ENCODE measurements at regions of chr11 and their contacts with region 1.

Region 1: GRCh38 chr11:27705873-27706820 is 5.9 kb upstream of the BDNF start:
- DNase-seq: no peak
- ATAC-seq: peak; percentile 87
- H3K4me3 ChIP-seq: no peak overlapping the region
- H3K27ac ChIP-seq: no peak overlapping the region
- H3K4me1 ChIP-seq: no peaks in the 10 kb centered on the region; the same call in 1 of the 2 replicates
- H3K27me3 ChIP-seq: peaks cover 0 to 10% of the 10 kb centered on the region in 2 experiments
- CTCF ChIP-seq: peak; percentile 69 to 81 (median 77)
- EP300 ChIP-seq: no peak
- POLR2A ChIP-seq: no peak
- RAD21 ChIP-seq: peak; percentile 44

Region 2: GRCh38 chr11:27720277-27720830 is 14.2 kb after region 1 on chr11:
- CTCF ChIA-PET with region 1: interaction called, 16 read pairs
- POLR2A ChIA-PET with region 1: no interaction called
- RAD21 ChIA-PET with region 1: interaction called, 3 read pairs
- SMC1A ChIA-PET with region 1: interaction called, 4 read pairs
- in situ Hi-C with region 1: no loop called
- intact Hi-C with region 1: no loop called
- DNase-seq: no peak
- ATAC-seq: no peak
- H3K4me3 ChIP-seq: no peak overlapping the region
- H3K27ac ChIP-seq: no peak overlapping the region
- H3K4me1 ChIP-seq: no peaks in the 10 kb centered on the region
- H3K27me3 ChIP-seq: peaks cover 8 to 12% of the 10 kb centered on the region in 2 experiments
- CTCF ChIP-seq: no peak
- EP300 ChIP-seq: no peak
- POLR2A ChIP-seq: no peak
- RAD21 ChIP-seq: no peak

Region 3: DNA sequence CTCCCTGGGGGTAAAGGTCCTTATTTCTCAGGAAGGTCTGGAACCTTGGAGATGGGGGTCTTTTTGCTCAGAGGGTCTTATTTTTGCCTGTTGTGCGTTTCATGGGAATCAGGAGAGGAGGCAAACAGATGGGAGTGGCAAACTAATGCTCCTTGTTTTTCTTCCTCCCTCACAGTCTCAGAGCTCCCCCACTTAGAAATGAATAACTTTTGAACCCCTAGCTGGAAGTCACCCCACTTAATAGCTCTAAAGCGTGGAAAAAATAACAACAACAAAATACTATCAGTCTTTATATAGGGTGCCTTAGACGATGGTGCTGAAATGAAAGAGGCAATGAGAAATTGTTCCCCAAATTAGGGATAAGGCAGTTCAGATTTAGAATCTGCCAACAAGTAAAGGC is 70.9 kb after region 1 on chr11:
- CTCF ChIA-PET with region 1: no interaction called
- POLR2A ChIA-PET with region 1: no interaction called
- RAD21 ChIA-PET with region 1: no interaction called
- SMC1A ChIA-PET with region 1: no interaction called
- in situ Hi-C with region 1: no loop called
- intact Hi-C with region 1: no loop called
- DNase-seq: no peak
- ATAC-seq: no peak
- H3K4me3 ChIP-seq: no peak overlapping the region
- H3K27ac ChIP-seq: no peak overlapping the region
- H3K4me1 ChIP-seq: no peaks in the 10 kb centered on the region
- H3K27me3 ChIP-seq: no peaks in the 10 kb centered on the region
- CTCF ChIP-seq: no peak
- EP300 ChIP-seq: no peak
- POLR2A ChIP-seq: no peak
- RAD21 ChIP-seq: no peak

Region 4: GRCh38 chr11:28017816-28018215 is 311.7 kb after region 1 on chr11:
- CTCF ChIA-PET with region 1: no interaction called
- POLR2A ChIA-PET with region 1: no interaction called
- RAD21 ChIA-PET with region 1: no interaction called
- SMC1A ChIA-PET with region 1: no interaction called
- in situ Hi-C with region 1: no loop called
- intact Hi-C with region 1: loop called (anchors 10 kb)
- DNase-seq: no peak
- ATAC-seq: no peak
- H3K4me3 ChIP-seq: no peak overlapping the region
- H3K27ac ChIP-seq: no peak overlapping the region
- H3K4me1 ChIP-seq: no peaks in the 10 kb centered on the region
- H3K27me3 ChIP-seq: no peaks in the 10 kb centered on the region
- CTCF ChIP-seq: no peak
- EP300 ChIP-seq: no peak
- POLR2A ChIP-seq: no peak
- RAD21 ChIP-seq: no peak

Region 5: GRCh38 chr11:28107748-28108618 is 401.8 kb after region 1 on chr11 and contains the starts of genes KIF18A and METTL15:
- CTCF ChIA-PET with region 1: interaction called, 3 read pairs
- POLR2A ChIA-PET with region 1: no interaction called
- RAD21 ChIA-PET with region 1: interaction called, 5 read pairs
- SMC1A ChIA-PET with region 1: no interaction called
- in situ Hi-C with region 1: no loop called
- intact Hi-C with region 1: loop called (anchors 1 kb)
- DNase-seq: peak; percentile 96
- ATAC-seq: peak; percentile 91
- H3K4me3 ChIP-seq: peak within 1 kb of the TSS; percentile 86
- H3K27ac ChIP-seq: peak within 1 kb of the TSS; percentile 84
- H3K4me1 ChIP-seq: peaks cover 6% of the 10 kb centered on the region
- H3K27me3 ChIP-seq: no peaks in the 10 kb centered on the region
- CTCF ChIP-seq: no peak
- EP300 ChIP-seq: peak in 1 of 2 experiments; percentile 5; a peak in 1 of 4 replicates
- POLR2A ChIP-seq: peak; percentile 92
- RAD21 ChIP-seq: no peak
- polyA plus RNA-seq, gene KIF18A: 11.5 to 14.9 TPM
- polyA plus RNA-seq, gene METTL15: 10.5 to 15.1 TPM

Region 6: GRCh38 chr11:28529540-28530410 is 823.6 kb after region 1 on chr11:
- CTCF ChIA-PET with region 1: interaction called, 114 read pairs
- POLR2A ChIA-PET with region 1: no interaction called
- RAD21 ChIA-PET with region 1: interaction called, 72 read pairs
- SMC1A ChIA-PET with region 1: interaction called, 48 read pairs
- in situ Hi-C with region 1: loop called (anchors 5 kb)
- intact Hi-C with region 1: no loop called
- DNase-seq: no peak
- ATAC-seq: peak; percentile 70
- H3K4me3 ChIP-seq: no peak overlapping the region
- H3K27ac ChIP-seq: no peak overlapping the region
- H3K4me1 ChIP-seq: no peaks in the 10 kb centered on the region
- H3K27me3 ChIP-seq: no peaks in the 10 kb centered on the region
- CTCF ChIP-seq: peak; percentile 21 to 46 (median 28); a peak in 4 of 6 replicates
- EP300 ChIP-seq: no peak
- POLR2A ChIP-seq: no peak
- RAD21 ChIP-seq: peak; percentile 62

Region 7: GRCh38 chr11:29159552-29160465 is 1453.7 kb after region 1 on chr11:
- CTCF ChIA-PET with region 1: interaction called, 5 read pairs
- POLR2A ChIA-PET with region 1: no interaction called
- RAD21 ChIA-PET with region 1: interaction called, 3 read pairs
- SMC1A ChIA-PET with region 1: interaction called, 3 read pairs
- in situ Hi-C with region 1: loop called (anchors 10 kb)
- intact Hi-C with region 1: no loop called
- DNase-seq: no peak
- ATAC-seq: peak; percentile 98
- H3K4me3 ChIP-seq: no peak overlapping the region
- H3K27ac ChIP-seq: no peak overlapping the region
- H3K4me1 ChIP-seq: no peaks in the 10 kb centered on the region
- H3K27me3 ChIP-seq: no peaks in the 10 kb centered on the region
- CTCF ChIP-seq: peak; percentile 38 to 64 (median 52); a peak in 5 of 6 replicates
- EP300 ChIP-seq: no peak
- POLR2A ChIP-seq: no peak
- RAD21 ChIP-seq: peak; percentile 72